HepG2 (cell line): ENCODE measurements at regions of chr15 and their contacts with region 1.

Region 1: GRCh38 chr15:90054618-90055097 is 47.6 kb downstream of the IDH2 start:
- DNase-seq: peak; percentile 90
- ATAC-seq: peak; percentile 79
- H3K4me3 ChIP-seq: peak overlapping the region in 1 of 3 experiments; percentile 24; a peak in 1 of 6 replicates
- H3K27ac ChIP-seq: peak overlapping the region; percentile 40
- H3K4me1 ChIP-seq: peaks cover 43% of the 10 kb centered on the region
- H3K27me3 ChIP-seq: no peaks in the 10 kb centered on the region
- CTCF ChIP-seq: no peak
- EP300 ChIP-seq: peak in 1 of 2 experiments; percentile 56; a peak in 1 of 4 replicates
- POLR2A ChIP-seq: no peak
- RAD21 ChIP-seq: no peak

Region 2: GRCh38 chr15:90037961-90038631 is 16.6 kb before region 1 on chr15:
- CTCF ChIA-PET with region 1: no interaction called
- POLR2A ChIA-PET with region 1: interaction called, 5 read pairs
- in situ Hi-C with region 1: no loop called
- intact Hi-C with region 1: loop called (anchors 1 kb)
- DNase-seq: peak; percentile 52
- ATAC-seq: no peak; the same call in 2 of the 3 replicates
- H3K4me3 ChIP-seq: no peak overlapping the region
- H3K27ac ChIP-seq: peak overlapping the region; percentile 59
- H3K4me1 ChIP-seq: peaks cover 74% of the 10 kb centered on the region
- H3K27me3 ChIP-seq: no peaks in the 10 kb centered on the region
- CTCF ChIP-seq: no peak
- EP300 ChIP-seq: no peak
- POLR2A ChIP-seq: no peak
- RAD21 ChIP-seq: no peak